IMR-90 (cell line): ENCODE measurements at regions of chr3 and their contacts with region 1.

Region 1: DNA sequence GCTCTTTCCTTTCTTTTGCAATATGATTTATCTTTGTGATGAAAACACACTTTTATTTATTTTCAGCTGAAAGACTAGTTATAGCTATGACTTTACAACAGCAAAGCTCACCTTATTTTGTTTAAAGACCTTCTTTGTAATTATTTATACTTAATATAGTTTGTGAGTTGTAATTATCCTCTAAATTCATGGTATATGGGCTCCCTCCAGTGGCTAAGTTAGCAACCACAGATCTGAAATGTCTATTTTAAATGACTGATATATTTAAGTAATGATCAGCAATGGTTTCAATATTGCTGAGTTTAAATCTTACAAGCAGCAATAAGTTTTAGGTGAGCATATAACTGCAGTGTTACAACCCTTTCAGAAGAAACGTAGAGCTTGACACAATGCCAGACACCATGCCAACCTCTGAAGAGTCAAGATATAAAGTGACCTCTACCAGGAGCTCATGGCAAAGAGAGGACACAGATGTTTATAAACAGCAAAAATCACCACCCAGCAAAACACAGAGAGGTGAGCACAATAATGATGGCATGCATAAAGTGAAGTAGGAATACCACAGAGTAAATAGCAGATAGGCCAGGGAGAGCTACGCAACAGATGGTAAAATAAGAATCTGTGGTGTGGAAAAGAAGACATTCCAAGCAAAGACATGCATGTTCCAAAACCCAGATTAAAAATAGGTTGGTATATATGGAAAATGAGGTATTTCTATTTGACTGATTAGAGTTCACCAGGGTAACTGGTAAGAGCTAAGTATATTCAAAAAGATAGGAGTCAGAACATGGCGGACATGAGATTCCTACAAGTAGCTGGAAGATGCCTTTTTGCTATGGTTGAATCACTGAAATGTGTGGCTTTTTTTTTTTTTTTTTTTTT is 143.7 kb upstream of the ZNF385D start:
- DNase-seq: peak; percentile 35
- ATAC-seq: peak; percentile 66; the same call in 1 of the 2 replicates
- H3K4me3 ChIP-seq: no peak overlapping the region
- H3K27ac ChIP-seq: no peak overlapping the region
- H3K4me1 ChIP-seq: no peaks in the 10 kb centered on the region
- H3K27me3 ChIP-seq: no peaks in the 10 kb centered on the region
- CTCF ChIP-seq: peak; percentile 65
- POLR2A ChIP-seq: no peak
- RAD21 ChIP-seq: peak; percentile 74

Region 2: GRCh38 chr3:20225769-20226168 is 1668.9 kb before region 1 on chr3:
- CTCF ChIA-PET with region 1: no interaction called
- POLR2A ChIA-PET with region 1: no interaction called
- dilution Hi-C with region 1: no loop called
- in situ Hi-C with region 1: no loop called
- intact Hi-C with region 1: loop called (anchors 10 kb)
- DNase-seq: peak; percentile 3
- ATAC-seq: no peak; the same call in 1 of the 2 replicates
- H3K4me3 ChIP-seq: no peak overlapping the region
- H3K27ac ChIP-seq: no peak overlapping the region
- H3K4me1 ChIP-seq: no peaks in the 10 kb centered on the region
- H3K27me3 ChIP-seq: no peaks in the 10 kb centered on the region
- CTCF ChIP-seq: 0 out of 2 replicates have a peak, but pooled peaks have one; percentile 27
- POLR2A ChIP-seq: no peak
- RAD21 ChIP-seq: peak; percentile 35

Region 3: DNA sequence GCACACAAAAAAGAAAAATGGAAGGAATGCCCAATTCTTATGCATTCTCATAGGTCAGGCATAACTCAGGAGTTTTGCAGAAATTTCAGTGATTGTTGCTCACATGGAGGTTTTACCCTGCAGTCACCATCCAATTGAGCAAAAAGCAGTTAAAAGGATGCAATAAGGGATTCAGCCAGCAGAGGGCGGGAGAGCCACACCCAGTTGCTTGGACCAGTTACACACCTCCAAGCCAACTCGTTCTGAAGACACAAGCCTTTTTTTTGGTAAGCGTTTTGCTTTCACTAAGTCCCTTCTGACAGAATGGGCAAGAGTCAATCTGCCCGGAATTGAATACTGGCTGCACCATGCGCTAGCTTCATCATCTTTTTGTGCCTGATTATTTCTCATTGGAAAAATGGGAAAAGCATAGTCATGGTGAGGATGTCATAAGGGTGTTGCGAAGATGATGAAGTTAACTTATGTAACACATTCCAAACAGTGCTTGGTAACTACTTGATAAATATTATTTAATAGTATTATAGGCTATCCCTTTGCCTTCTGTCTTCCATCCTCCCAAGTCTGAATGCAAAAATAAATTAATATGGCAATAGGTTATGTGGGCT is 1554.3 kb before region 1 on chr3:
- CTCF ChIA-PET with region 1: no interaction called
- POLR2A ChIA-PET with region 1: no interaction called
- dilution Hi-C with region 1: no loop called
- in situ Hi-C with region 1: loop called (anchors 25 kb)
- intact Hi-C with region 1: loop called (anchors 2 kb)
- DNase-seq: peak; percentile 50
- ATAC-seq: peak; percentile 87
- H3K4me3 ChIP-seq: no peak overlapping the region
- H3K27ac ChIP-seq: no peak overlapping the region
- H3K4me1 ChIP-seq: no peaks in the 10 kb centered on the region
- H3K27me3 ChIP-seq: no peaks in the 10 kb centered on the region
- CTCF ChIP-seq: peak; percentile 85
- POLR2A ChIP-seq: no peak
- RAD21 ChIP-seq: peak; percentile 81

Region 4: GRCh38 chr3:20511863-20512505 is 1382.7 kb before region 1 on chr3:
- CTCF ChIA-PET with region 1: no interaction called
- POLR2A ChIA-PET with region 1: no interaction called
- dilution Hi-C with region 1: no loop called
- in situ Hi-C with region 1: loop called (anchors 25 kb)
- intact Hi-C with region 1: loop called (anchors 1 kb)
- DNase-seq: peak; percentile 58
- ATAC-seq: peak; percentile 99
- H3K4me3 ChIP-seq: no peak overlapping the region
- H3K27ac ChIP-seq: no peak overlapping the region
- H3K4me1 ChIP-seq: no peaks in the 10 kb centered on the region
- H3K27me3 ChIP-seq: no peaks in the 10 kb centered on the region
- CTCF ChIP-seq: peak; percentile 83
- POLR2A ChIP-seq: no peak
- RAD21 ChIP-seq: peak; percentile 93

Region 5: GRCh38 chr3:21484057-21484827 is 410.5 kb before region 1 on chr3:
- CTCF ChIA-PET with region 1: no interaction called
- POLR2A ChIA-PET with region 1: no interaction called
- dilution Hi-C with region 1: no loop called
- in situ Hi-C with region 1: no loop called
- intact Hi-C with region 1: loop called (anchors 2 kb)
- DNase-seq: peak; percentile 62
- ATAC-seq: peak; percentile 92
- H3K4me3 ChIP-seq: no peak overlapping the region
- H3K27ac ChIP-seq: no peak overlapping the region
- H3K4me1 ChIP-seq: no peaks in the 10 kb centered on the region
- H3K27me3 ChIP-seq: no peaks in the 10 kb centered on the region
- CTCF ChIP-seq: peak; percentile 56
- POLR2A ChIP-seq: no peak
- RAD21 ChIP-seq: peak; percentile 71

Region 6: DNA sequence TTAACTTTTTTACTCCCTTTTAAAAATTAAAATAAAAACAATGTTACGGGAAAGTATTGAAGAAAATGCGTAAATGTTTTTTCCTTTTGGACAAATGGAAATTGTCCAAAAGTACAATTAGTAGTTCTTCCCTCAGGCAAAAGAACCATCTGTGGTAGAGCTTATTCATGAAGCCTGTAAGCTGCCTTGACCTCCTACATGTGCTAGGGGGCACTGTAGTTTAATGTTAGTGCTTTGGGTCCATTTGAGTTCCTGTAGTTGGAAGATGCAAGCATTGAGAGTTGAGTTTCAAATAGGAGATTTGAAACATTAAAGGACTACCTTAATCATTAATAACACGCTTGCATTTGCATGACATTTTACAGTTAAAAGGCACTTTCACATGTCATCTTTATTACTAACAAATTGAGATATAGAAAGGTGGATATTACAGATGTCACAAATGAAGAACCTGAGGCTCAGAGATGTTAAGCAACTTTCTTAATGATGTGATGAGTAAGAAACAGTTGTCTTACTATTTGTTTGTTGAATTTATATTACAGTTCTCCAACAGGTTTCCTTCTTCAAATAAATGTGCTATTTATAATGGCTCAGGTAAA is 141.9 kb before region 1 on chr3:
- CTCF ChIA-PET with region 1: no interaction called
- POLR2A ChIA-PET with region 1: no interaction called
- dilution Hi-C with region 1: no loop called
- in situ Hi-C with region 1: no loop called
- intact Hi-C with region 1: loop called (anchors 2 kb)
- DNase-seq: peak; percentile 49
- ATAC-seq: peak; percentile 35; the same call in 1 of the 2 replicates
- H3K4me3 ChIP-seq: no peak overlapping the region
- H3K27ac ChIP-seq: no peak overlapping the region
- H3K4me1 ChIP-seq: no peaks in the 10 kb centered on the region
- H3K27me3 ChIP-seq: no peaks in the 10 kb centered on the region; the same call in 1 of the 2 replicates
- CTCF ChIP-seq: peak; percentile 52
- POLR2A ChIP-seq: no peak
- RAD21 ChIP-seq: peak; percentile 45